ENCODE measurements at regions of chr3 and their contacts with region 1.

Region 1: GRCh38 chr3:112043603-112044201 is 9.2 kb downstream of the TMPRSS7 start:
- H3K4me3 ChIP-seq: no peak overlapping the region
- H3K27ac ChIP-seq: no peak overlapping the region
- H3K4me1 ChIP-seq: no peaks in the 10 kb centered on the region
- CTCF ChIP-seq: peak; percentile 46

Region 2: GRCh38 chr3:111998636-111999483 is 44.8 kb before region 1 on chr3 and contains the start of gene TAGLN3:
- CTCF ChIA-PET with region 1: interaction called, 10 read pairs
- POLR2A ChIA-PET with region 1: no interaction called
- H3K4me3 ChIP-seq: 0 out of 2 replicates have a peak within 1 kb of the TSS, but pooled peaks have one; percentile 3
- H3K27ac ChIP-seq: no peak within 1 kb of the TSS
- H3K4me1 ChIP-seq: no peaks in the 10 kb centered on the region
- CTCF ChIP-seq: no peak

Region 3: GRCh38 chr3:112013058-112013783 is 30.5 kb before region 1 on chr3:
- CTCF ChIA-PET with region 1: interaction called, 27 read pairs
- POLR2A ChIA-PET with region 1: no interaction called
- H3K4me3 ChIP-seq: no peak overlapping the region
- H3K27ac ChIP-seq: no peak overlapping the region
- H3K4me1 ChIP-seq: no peaks in the 10 kb centered on the region
- CTCF ChIP-seq: no peak

Region 4: DNA sequence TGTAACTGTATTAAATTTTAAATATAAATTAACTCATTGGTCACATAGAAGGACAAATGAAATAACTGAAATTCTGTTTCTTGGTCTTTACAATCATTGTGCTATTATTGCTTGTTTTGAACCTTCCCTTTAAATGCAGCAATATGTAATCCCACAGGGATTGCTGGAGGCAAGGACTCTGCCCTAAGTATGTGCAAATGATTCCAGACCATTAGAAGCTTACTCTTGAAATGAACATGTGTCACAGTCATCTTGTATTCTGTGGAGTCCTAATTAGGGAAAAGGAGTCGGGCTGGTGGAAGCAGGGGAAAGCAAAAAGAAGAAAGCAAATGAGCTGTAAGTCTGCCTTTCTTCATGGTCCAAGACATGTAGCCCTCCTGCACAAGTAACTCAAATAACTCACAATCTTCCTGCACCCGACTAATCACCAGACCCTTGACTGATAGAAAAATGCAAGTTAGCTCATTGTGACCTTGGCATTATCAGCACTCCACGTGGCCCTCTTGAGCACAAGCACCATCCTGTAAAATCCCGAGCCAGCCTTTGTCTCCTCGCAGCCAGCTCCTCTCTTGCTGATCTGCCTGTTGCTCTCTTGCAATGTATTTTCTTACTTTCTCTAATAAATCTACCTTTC is 11.5 kb before region 1 on chr3:
- CTCF ChIA-PET with region 1: interaction called, 10 read pairs
- POLR2A ChIA-PET with region 1: no interaction called
- H3K4me3 ChIP-seq: no peak overlapping the region
- H3K27ac ChIP-seq: no peak overlapping the region
- H3K4me1 ChIP-seq: no peaks in the 10 kb centered on the region
- CTCF ChIP-seq: no peak

Region 5: GRCh38 chr3:112357930-112358780 is 314.5 kb after region 1 on chr3:
- CTCF ChIA-PET with region 1: no interaction called
- POLR2A ChIA-PET with region 1: no interaction called
- H3K4me3 ChIP-seq: no peak overlapping the region
- H3K27ac ChIP-seq: no peak overlapping the region
- H3K4me1 ChIP-seq: no peaks in the 10 kb centered on the region
- CTCF ChIP-seq: no peak